ENCODE measurements at regions of chr5 and their contacts with region 1.

Region 1: DNA sequence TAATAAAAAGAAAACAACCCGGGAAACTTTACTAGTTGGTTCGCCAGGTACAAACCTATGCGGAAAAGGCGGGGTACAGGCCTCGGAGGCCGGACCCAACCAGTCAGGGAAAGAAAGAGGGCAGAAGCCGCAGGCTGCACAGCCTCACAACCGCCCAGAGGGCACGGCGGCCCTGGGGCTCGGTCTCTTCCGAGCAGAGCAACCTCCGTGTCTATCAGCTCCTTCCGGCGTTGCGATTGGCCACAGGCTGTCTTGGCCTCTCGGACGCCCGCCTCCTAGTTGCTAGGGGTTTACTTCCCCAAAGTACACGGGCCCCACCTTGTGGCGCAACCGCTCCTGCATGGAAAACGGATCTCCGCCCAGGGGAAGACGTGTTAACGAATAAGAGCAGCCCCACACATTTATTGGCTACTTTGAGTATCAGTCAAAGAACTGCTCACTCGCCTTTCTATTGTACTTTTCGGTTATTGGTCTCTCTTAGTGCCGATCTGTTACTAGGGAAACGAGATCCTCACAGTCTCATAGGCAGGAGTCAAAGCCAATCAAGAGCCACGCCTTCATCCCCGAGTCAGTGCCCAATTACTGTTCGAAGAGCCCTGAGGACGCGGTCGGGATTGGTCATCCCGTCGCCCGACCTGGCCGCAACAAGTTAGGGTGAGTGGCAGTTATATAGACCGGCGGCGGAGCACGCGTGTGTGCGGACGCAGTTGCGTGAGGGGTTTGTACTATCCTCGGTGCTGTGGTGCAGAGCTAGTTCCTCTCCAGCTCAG is at the start of gene G3BP1:
- DNase-seq: peak; percentile 100
- ATAC-seq: peak; percentile 86
- H3K4me3 ChIP-seq: peak within 1 kb of the TSS; percentile 63
- H3K27ac ChIP-seq: peak within 1 kb of the TSS; percentile 80
- H3K4me1 ChIP-seq: peaks cover 5% of the 10 kb centered on the region; the same call in 1 of the 2 replicates
- H3K27me3 ChIP-seq: no peaks in the 10 kb centered on the region
- CTCF ChIP-seq: peak; percentile 96
- POLR2A ChIP-seq: peak; percentile 97
- RAD21 ChIP-seq: peak; percentile 79
- total RNA-seq, gene G3BP1: 272 and 482 TPM in 2 replicates

Region 2: DNA sequence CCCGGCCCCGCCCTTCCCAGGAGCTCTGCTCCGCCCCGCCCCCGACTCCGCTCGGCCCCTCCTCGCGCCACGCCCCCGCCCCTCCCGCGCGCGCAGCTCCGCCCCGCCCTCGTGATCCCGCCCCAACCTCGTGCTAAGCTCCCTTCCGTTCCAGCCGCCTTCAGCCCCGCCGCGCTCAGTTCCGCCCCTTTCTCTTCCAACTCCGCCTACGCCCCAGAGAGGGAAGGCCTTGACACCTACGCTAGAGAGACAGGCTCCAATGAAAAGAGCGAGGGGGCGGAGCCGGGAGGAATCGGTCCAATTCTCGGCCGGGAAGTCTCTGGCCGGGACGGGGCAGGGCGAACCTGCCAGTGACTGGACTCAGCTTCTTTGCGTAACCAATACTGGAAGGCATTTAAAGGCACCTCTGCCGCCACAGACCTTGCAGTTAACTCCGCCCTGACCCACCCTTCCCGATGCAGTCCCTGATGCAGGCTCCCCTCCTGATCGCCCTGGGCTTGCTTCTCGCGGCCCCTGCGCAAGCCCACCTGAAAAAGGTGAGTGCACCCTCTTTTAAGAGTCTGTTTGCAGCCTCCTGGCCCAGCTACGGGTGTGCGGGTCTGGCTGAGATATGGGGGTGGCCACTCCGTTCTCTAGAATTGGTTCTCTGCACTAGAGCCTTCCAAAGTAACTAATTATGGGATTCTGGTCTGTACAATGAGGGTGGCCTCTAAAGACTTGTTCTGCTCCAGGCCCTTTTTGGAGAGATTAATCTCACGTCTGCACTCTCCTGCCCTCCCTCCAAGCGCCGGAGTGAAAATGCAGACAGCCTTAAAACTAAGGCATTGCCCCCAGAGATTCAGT is 518.5 kb before region 1 on chr5 and contains the start of gene GM2A:
- CTCF ChIA-PET with region 1: no interaction called
- POLR2A ChIA-PET with region 1: no interaction called
- dilution Hi-C with region 1: no loop called
- in situ Hi-C with region 1: no loop called
- intact Hi-C with region 1: loop called (anchors 2 kb)
- DNase-seq: peak; percentile 99
- ATAC-seq: peak; percentile 96
- H3K4me3 ChIP-seq: peak within 1 kb of the TSS; percentile 95
- H3K27ac ChIP-seq: peak within 1 kb of the TSS; percentile 31
- H3K4me1 ChIP-seq: no peaks in the 10 kb centered on the region; the same call in 1 of the 2 replicates
- H3K27me3 ChIP-seq: peaks cover 10% of the 10 kb centered on the region
- CTCF ChIP-seq: no peak
- POLR2A ChIP-seq: 0 out of 2 replicates have a peak, but pooled peaks have one; percentile 30
- RAD21 ChIP-seq: no peak
- total RNA-seq, gene GM2A: 18.5 and 18.6 TPM in 2 replicates

Region 3: GRCh38 chr5:151523335-151523734 is 248.1 kb before region 1 on chr5:
- CTCF ChIA-PET with region 1: no interaction called
- POLR2A ChIA-PET with region 1: no interaction called
- dilution Hi-C with region 1: no loop called
- in situ Hi-C with region 1: no loop called
- intact Hi-C with region 1: no loop called
- DNase-seq: peak; percentile 55
- ATAC-seq: peak; percentile 93
- H3K4me3 ChIP-seq: no peak overlapping the region
- H3K27ac ChIP-seq: no peak overlapping the region
- H3K4me1 ChIP-seq: no peaks in the 10 kb centered on the region
- H3K27me3 ChIP-seq: peaks cover 4% of the 10 kb centered on the region; the same call in 1 of the 2 replicates
- CTCF ChIP-seq: peak; percentile 67
- POLR2A ChIP-seq: no peak
- RAD21 ChIP-seq: peak; percentile 81

Region 4: GRCh38 chr5:151659001-151659754 is 112.3 kb before region 1 on chr5:
- CTCF ChIA-PET with region 1: interaction called, 4 read pairs
- POLR2A ChIA-PET with region 1: interaction called, 6 read pairs
- dilution Hi-C with region 1: no loop called
- in situ Hi-C with region 1: no loop called
- intact Hi-C with region 1: loop called (anchors 1 kb)
- DNase-seq: peak; percentile 80
- ATAC-seq: peak; percentile 74
- H3K4me3 ChIP-seq: no peak overlapping the region
- H3K27ac ChIP-seq: peak overlapping the region; percentile 82
- H3K4me1 ChIP-seq: peaks cover 17% of the 10 kb centered on the region
- H3K27me3 ChIP-seq: no peaks in the 10 kb centered on the region
- CTCF ChIP-seq: peak; percentile 93
- POLR2A ChIP-seq: peak; percentile 51
- RAD21 ChIP-seq: peak; percentile 95

Region 5: DNA sequence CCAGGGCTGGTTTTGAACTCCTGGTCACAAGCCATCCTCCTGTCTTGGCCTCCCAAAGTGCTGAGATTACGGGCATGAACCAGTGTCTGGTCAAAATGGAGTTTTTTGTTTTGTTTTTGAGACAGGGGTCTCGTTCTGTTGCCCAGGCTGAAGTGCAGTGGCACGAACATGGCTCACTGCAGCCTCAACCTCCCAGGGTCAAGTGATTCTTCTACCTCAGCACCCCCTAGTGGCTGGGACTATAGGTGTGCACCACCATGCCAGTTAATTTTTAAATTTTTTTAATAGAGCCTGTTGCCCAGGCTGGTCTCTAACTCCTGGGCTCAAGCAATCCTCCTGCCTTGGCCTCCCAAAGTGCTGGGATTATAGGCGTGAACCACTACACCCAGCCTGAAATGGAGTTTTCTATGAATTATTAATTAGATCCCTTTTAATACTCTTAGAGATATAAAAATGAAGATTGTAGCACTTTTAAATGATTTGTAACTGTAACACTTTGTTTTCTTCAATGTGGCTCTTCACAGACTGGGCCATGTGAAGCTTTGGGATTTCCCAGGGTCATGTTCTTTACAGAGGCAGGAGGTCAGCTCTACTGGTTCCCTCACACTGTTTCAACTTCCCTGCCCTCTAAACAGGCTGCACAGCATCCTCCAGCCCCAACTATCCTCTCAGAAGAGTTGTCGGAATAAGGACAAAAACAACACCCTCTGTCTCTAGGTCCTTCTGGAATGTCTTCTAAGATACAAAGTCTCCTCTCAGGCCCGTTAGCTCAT is 52.0 kb before region 1 on chr5:
- CTCF ChIA-PET with region 1: interaction called, 4 read pairs
- POLR2A ChIA-PET with region 1: no interaction called
- dilution Hi-C with region 1: no loop called
- in situ Hi-C with region 1: no loop called
- intact Hi-C with region 1: loop called (anchors 1 kb)
- DNase-seq: peak; percentile 50
- ATAC-seq: peak; percentile 56
- H3K4me3 ChIP-seq: no peak overlapping the region
- H3K27ac ChIP-seq: peak overlapping the region; percentile 88
- H3K4me1 ChIP-seq: peaks cover 16% of the 10 kb centered on the region
- H3K27me3 ChIP-seq: no peaks in the 10 kb centered on the region
- CTCF ChIP-seq: peak; percentile 64
- POLR2A ChIP-seq: no peak
- RAD21 ChIP-seq: peak; percentile 68

Region 6: DNA sequence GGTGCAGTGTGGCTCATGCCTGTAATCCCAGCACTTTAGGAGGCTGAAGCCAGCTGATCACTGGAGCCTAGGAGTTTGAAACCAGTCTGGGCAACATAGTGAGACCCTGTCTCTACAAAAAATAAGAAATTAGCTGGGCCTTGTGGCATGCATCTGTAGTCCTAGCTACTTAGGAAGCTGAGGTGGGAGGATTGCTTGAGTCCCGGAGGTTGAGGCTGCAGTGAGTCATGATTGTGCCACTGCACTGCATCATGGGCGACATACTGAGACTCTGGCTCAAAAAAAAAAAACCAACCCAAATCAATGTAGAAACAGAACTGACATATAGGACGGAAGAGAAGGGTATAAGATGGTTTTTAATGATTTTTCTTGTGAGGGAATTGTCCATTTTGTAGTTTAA is 28.0 kb after region 1 on chr5:
- CTCF ChIA-PET with region 1: no interaction called
- POLR2A ChIA-PET with region 1: no interaction called
- dilution Hi-C with region 1: no loop called
- in situ Hi-C with region 1: no loop called
- intact Hi-C with region 1: loop called (anchors 2 kb)
- DNase-seq: peak; percentile 51
- ATAC-seq: peak; percentile 50; the same call in 1 of the 2 replicates
- H3K4me3 ChIP-seq: no peak overlapping the region
- H3K27ac ChIP-seq: no peak overlapping the region
- H3K4me1 ChIP-seq: peaks cover 1% of the 10 kb centered on the region; the same call in 1 of the 2 replicates
- H3K27me3 ChIP-seq: no peaks in the 10 kb centered on the region
- CTCF ChIP-seq: no peak
- POLR2A ChIP-seq: no peak
- RAD21 ChIP-seq: no peak

Region 7: DNA sequence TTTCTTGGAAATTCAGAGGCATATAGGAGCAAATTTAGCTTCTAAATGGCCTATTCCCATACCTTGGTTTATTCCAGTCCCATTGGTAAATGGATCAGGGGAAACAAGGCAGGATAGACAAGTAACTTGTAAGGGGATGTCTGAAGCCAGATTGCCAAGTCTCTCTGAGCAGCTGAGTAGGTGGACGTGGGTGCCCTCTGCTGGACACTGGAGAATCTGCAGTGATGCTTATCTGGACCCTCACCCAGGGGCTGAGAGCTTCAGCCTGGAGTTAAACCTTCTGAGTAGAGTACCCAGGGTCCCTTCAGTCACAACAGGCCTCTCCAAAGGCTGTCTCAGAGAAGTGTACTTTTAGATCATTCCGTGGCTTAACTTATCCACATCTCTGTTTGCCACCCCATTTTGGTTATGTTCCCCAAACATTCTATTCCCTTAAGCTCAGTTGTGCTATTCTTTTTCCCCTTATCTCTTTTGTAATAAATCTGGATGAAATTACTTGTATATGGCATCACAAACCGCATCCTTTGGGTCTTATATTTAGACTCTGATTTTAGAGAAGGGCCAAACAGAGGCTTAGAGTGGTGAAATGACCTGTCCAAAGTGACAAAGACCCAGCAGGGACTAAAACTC is 371.5 kb after region 1 on chr5:
- CTCF ChIA-PET with region 1: no interaction called
- POLR2A ChIA-PET with region 1: no interaction called
- dilution Hi-C with region 1: no loop called
- in situ Hi-C with region 1: no loop called
- intact Hi-C with region 1: loop called (anchors 5 kb)
- DNase-seq: peak; percentile 50
- ATAC-seq: peak; percentile 94
- H3K4me3 ChIP-seq: no peak overlapping the region
- H3K27ac ChIP-seq: no peak overlapping the region
- H3K4me1 ChIP-seq: no peaks in the 10 kb centered on the region
- H3K27me3 ChIP-seq: no peaks in the 10 kb centered on the region
- CTCF ChIP-seq: peak; percentile 70
- POLR2A ChIP-seq: no peak
- RAD21 ChIP-seq: peak; percentile 67